ENCODE measurements at regions of chr1 and their contacts with region 1.

Region 1: DNA sequence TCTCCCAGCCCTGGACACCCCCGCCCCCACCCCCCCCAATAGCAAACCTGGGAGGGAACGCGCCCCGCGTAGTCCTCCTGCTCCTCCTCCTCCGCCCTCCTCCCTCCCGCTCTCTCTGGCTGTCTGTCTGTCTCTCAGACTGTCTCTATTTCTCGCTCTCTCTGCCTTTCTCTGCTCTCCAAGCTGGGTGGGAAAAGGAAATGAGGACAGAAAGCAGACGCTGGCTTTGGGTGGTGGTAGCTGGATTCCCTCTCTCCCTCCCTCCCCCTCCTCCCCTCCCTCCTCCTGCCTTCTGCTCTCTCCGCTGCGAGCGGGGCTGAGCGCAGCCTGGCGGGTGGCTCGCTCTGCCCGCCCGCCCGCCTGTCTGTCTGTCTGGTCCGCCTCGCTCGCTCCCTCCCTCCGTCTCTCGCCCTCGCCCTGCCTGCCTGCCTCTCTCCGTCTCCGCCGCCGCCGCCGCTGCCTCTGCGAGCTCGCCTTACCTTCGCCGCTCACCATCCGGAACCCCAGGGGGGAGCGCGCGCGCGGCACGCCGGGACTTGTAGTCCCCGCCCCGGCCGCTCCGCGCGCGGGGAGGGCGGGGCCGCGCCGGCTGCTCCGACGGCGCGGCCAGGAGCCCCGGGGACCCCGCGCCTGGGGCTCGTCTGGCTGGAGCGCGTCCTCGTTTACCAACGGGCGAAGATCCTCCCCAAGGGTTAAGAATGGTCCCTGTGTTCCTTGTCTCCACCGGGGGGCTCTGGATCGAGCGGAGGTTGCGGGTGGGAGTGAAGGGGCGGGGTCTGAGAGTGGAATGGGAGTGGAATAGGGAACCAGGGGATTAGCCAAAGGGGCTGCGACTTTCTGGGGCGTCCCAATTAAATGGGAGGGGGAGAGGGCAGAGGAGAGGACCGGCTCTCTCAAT is at the start of gene AHDC1:
- DNase-seq: peak; percentile 65 to 88
- H3K4me3 ChIP-seq: peak within 1 kb of the TSS; percentile 71
- H3K27ac ChIP-seq: no peak within 1 kb of the TSS
- H3K4me1 ChIP-seq: peaks cover 13% of the 10 kb centered on the region
- H3K27me3 ChIP-seq: no peaks in the 10 kb centered on the region
- CTCF ChIP-seq: no peak
- total RNA-seq, gene AHDC1: 45.9 and 48.8 TPM in 2 replicates

Region 2: DNA sequence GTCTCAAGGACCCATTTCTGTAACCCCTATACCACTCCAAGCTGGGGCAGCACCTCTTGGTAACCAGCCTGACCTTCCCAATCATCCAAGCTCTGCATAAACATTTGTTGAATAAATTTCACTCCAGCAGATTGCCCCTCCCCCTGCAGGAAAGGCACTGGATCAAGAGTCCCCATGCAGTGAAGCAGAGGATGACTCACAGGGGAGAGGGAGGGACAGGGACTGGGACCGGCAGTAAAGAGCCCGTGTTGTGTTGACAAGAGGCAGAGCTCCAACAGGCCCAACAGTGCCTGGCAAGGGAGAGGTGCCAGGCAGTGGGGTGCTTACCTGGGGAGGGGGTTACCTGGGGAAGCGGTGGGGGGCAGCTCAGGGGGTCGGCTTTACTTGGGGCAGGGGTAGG is 481.3 kb before region 1 on chr1:
- CTCF ChIA-PET with region 1: interaction called, 14 read pairs
- POLR2A ChIA-PET with region 1: no interaction called
- intact Hi-C with region 1: no loop called
- DNase-seq: peak; percentile 67 to 75
- H3K4me3 ChIP-seq: no peak overlapping the region
- H3K27ac ChIP-seq: peak overlapping the region; percentile 50; the same call in 1 of the 2 replicates
- H3K4me1 ChIP-seq: peaks cover 21% of the 10 kb centered on the region
- H3K27me3 ChIP-seq: no peaks in the 10 kb centered on the region
- CTCF ChIP-seq: no peak

Region 3: GRCh38 chr1:27300341-27301051 is 303.4 kb before region 1 on chr1:
- CTCF ChIA-PET with region 1: no interaction called
- POLR2A ChIA-PET with region 1: no interaction called
- intact Hi-C with region 1: loop called (anchors 1 kb)
- DNase-seq: peak; percentile 43 to 80
- H3K4me3 ChIP-seq: no peak overlapping the region
- H3K27ac ChIP-seq: no peak overlapping the region
- H3K4me1 ChIP-seq: no peaks in the 10 kb centered on the region
- H3K27me3 ChIP-seq: no peaks in the 10 kb centered on the region
- CTCF ChIP-seq: peak; percentile 88

Region 4: GRCh38 chr1:27372808-27373690 is 230.9 kb before region 1 on chr1:
- CTCF ChIA-PET with region 1: no interaction called
- POLR2A ChIA-PET with region 1: no interaction called
- intact Hi-C with region 1: no loop called
- DNase-seq: no peak
- H3K4me3 ChIP-seq: no peak overlapping the region
- H3K27ac ChIP-seq: no peak overlapping the region
- H3K4me1 ChIP-seq: no peaks in the 10 kb centered on the region
- H3K27me3 ChIP-seq: no peaks in the 10 kb centered on the region
- CTCF ChIP-seq: peak; percentile 29; the same call in 1 of the 2 replicates

Region 5: GRCh38 chr1:27416387-27417111 is 187.4 kb before region 1 on chr1:
- CTCF ChIA-PET with region 1: interaction called, 4 read pairs
- POLR2A ChIA-PET with region 1: no interaction called
- intact Hi-C with region 1: loop called (anchors 5 kb)
- DNase-seq: peak; percentile 35 to 42
- H3K4me3 ChIP-seq: no peak overlapping the region
- H3K27ac ChIP-seq: no peak overlapping the region
- H3K4me1 ChIP-seq: no peaks in the 10 kb centered on the region
- H3K27me3 ChIP-seq: no peaks in the 10 kb centered on the region
- CTCF ChIP-seq: peak; percentile 74

Region 6: DNA sequence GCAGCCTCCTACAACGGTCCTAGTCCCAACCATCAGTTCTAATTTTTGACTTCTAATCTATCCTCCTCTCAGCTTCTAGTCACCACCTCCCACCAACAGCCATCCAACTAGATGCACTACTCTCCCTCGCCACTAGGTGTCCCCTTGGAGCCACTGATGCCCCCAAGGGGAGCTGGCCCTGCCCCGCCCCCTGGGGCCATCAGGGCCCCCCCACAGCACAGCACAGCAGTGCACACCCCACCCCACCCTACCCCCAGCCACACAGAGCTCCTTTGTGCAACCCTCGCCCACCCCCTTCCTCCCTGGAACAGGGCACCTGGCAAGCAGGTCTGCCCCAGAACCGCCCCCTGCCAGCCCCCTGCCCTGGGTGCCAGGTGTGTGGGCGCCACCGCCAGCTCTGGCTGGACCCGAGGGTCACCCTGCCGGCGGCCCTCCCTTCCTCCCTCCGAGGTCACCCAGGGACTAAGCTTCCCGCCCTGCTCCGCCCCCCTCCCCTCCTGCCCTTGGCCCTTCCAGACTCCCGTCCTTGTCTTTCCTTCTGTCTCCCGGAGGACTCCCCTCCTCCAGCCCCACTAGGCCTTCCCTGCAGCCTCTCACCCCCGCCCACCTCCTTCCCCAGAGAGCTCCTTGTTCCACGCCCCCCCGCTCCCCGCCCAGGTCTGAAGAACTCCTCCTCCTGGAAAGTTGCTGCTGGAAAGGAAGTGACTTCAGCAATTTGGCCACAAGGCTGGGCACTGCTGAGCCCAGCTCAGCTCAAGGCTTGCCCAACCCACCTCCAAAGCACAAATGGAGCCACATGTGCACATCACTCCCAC is 46.9 kb before region 1 on chr1:
- CTCF ChIA-PET with region 1: interaction called, 37 read pairs
- POLR2A ChIA-PET with region 1: interaction called, 13 read pairs
- intact Hi-C with region 1: loop called (anchors 1 kb)
- DNase-seq: peak; percentile 84 to 94
- H3K4me3 ChIP-seq: peak overlapping the region; percentile 29; the same call in 1 of the 2 replicates
- H3K27ac ChIP-seq: peak overlapping the region; percentile 88
- H3K4me1 ChIP-seq: peaks cover 22% of the 10 kb centered on the region
- H3K27me3 ChIP-seq: no peaks in the 10 kb centered on the region
- CTCF ChIP-seq: peak; percentile 91

Region 7: DNA sequence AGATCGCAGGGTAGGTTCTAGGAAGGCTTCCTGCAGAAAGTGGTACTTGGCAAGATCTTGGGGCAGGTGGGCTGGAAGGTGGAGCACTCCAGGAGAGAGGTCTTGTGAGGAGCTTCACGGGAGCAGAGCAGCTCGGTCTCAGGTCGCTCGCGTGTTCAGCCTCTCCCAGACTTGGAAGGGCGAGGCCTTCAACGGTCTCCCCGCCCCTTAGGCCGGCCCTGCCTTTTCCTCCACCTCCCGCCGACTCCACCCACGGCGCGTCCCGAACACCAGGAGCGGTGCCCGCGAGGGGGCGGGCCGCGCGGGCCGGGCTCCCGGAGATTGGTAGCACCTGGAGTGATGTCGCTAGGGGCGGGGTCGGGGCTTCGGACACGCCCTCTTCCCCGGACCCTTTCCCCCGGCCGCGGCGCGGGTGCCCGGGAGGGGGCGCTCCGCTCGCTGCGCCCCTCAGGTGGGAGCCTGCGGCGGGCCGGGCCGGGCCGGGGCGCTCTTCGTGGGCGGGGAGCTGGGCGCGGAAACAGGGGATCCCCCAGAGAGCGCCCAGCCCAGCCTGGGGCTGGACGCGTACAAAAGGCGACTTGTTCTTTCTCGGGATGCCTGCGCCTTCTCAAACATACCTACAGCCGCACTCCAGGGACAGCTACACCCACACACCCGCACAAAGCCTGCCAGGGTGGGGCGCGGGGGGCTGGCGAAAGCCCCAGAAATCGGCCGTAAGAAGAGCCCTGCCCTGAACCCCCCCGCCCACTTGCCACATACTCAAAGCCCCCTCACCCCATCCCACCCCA is 35.4 kb before region 1 on chr1:
- CTCF ChIA-PET with region 1: interaction called, 8 read pairs
- POLR2A ChIA-PET with region 1: no interaction called
- intact Hi-C with region 1: loop called (anchors 2 kb)
- DNase-seq: peak; percentile 82 to 98
- H3K4me3 ChIP-seq: peak overlapping the region; percentile 53; the same call in 1 of the 2 replicates
- H3K27ac ChIP-seq: no peak overlapping the region
- H3K4me1 ChIP-seq: peaks cover 32% of the 10 kb centered on the region
- H3K27me3 ChIP-seq: no peaks in the 10 kb centered on the region
- CTCF ChIP-seq: peak; percentile 58

Region 8: GRCh38 chr1:27634177-27634984 is 30.5 kb after region 1 on chr1:
- CTCF ChIA-PET with region 1: no interaction called
- POLR2A ChIA-PET with region 1: no interaction called
- intact Hi-C with region 1: no loop called
- DNase-seq: peak in 1 of 2 experiments; percentile 29
- H3K4me3 ChIP-seq: no peak overlapping the region
- H3K27ac ChIP-seq: no peak overlapping the region
- H3K4me1 ChIP-seq: no peaks in the 10 kb centered on the region
- H3K27me3 ChIP-seq: peaks cover 19% of the 10 kb centered on the region
- CTCF ChIP-seq: no peak

Region 9: GRCh38 chr1:27686223-27687018 is 82.5 kb after region 1 on chr1:
- CTCF ChIA-PET with region 1: interaction called, 10 read pairs
- POLR2A ChIA-PET with region 1: no interaction called
- intact Hi-C with region 1: no loop called
- DNase-seq: peak; percentile 76 to 91
- H3K4me3 ChIP-seq: no peak overlapping the region
- H3K27ac ChIP-seq: no peak overlapping the region
- H3K4me1 ChIP-seq: peaks cover 14% of the 10 kb centered on the region; the same call in 1 of the 2 replicates
- H3K27me3 ChIP-seq: no peaks in the 10 kb centered on the region
- CTCF ChIP-seq: no peak